Breast epithelium (tissue), 4 donors: ENCODE measurements at regions of chr14 and their contacts with region 1.

Region 1: DNA sequence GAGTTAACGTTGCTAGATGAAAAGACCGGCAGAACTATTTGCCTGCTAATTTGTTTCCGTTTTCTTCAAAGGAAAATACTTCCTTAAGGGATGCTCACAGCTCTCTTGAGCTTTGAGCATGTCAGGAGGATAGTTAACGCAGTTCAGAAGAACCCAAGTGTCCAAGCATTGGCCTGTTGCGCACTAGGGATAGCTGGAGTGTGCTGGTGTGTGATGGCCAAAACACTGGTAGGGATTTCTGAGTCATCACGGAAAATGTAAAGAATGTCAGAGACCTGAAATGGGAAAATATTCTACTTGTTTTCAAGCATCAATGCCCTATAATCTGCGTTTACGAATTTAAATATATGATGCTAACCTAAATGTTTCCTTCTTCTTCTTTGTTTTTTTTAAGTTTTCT is 97.8 kb downstream of the VRK1 start:
- DNase-seq: no peak
- H3K4me3 ChIP-seq: no peak overlapping the region
- H3K27ac ChIP-seq: no peak overlapping the region
- H3K4me1 ChIP-seq: no peaks in the 10 kb centered on the region
- H3K27me3 ChIP-seq: no peaks in the 10 kb centered on the region
- CTCF ChIP-seq: no peak
- POLR2A ChIP-seq: no peak

Region 2: DNA sequence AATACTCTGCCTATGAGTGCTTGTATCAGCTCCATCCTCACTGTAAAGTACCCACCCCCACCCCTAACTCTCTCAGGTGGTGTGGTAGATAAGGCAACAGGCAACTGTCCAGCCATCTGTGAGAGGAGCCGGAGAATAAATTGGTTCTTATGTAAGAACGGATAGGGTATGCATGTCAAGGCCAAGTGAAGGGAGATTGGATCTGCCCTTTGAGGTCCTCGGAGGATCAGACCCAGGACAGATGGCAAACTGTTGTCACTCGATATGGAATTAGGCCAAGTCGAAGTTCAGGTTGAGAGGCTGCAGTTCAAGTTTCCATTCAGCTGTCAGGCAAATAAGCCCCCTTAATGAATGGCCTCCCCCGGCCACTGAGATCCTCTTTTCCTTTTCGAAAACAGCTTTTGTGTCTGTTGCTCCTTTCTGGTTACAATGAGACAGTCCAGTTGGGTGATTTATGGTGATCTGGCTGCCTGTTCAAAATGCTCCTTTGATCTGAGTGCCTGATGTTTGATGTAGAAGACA is 22.5 kb after region 1 on chr14:
- intact Hi-C with region 1: loop called (anchors 1 kb)
- DNase-seq: no peak
- H3K4me3 ChIP-seq: no peak overlapping the region
- H3K27ac ChIP-seq: no peak overlapping the region
- H3K4me1 ChIP-seq: no peaks in the 10 kb centered on the region
- H3K27me3 ChIP-seq: no peaks in the 10 kb centered on the region
- CTCF ChIP-seq: no peak
- POLR2A ChIP-seq: no peak

Region 3: DNA sequence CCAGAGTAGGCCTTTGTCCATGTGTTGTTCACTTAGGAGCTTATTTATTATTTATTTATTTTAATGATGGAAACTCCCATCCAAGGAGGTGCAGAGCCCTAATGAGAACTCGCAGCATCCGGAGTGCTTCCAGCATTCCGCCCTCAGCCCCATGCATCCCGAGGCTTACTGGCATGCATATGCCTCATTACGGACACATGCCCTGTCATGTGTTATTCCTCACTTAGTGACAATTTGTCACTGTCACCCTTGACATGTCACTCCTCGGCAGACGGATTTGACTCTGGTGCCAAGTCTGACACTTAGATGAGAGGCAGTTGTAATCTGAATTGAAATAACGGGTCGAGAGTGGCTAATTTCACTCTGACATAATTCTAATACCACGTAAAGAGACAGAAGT is 35.0 kb after region 1 on chr14:
- intact Hi-C with region 1: no loop called
- DNase-seq: no peak
- H3K4me3 ChIP-seq: no peak overlapping the region
- H3K27ac ChIP-seq: no peak overlapping the region
- H3K4me1 ChIP-seq: no peaks in the 10 kb centered on the region
- H3K27me3 ChIP-seq: no peaks in the 10 kb centered on the region
- CTCF ChIP-seq: no peak
- POLR2A ChIP-seq: no peak

Region 4: GRCh38 chr14:97564334-97564733 is 669.4 kb after region 1 on chr14:
- intact Hi-C with region 1: no loop called
- DNase-seq: no peak
- H3K4me3 ChIP-seq: no peak overlapping the region
- H3K27ac ChIP-seq: no peak overlapping the region
- H3K4me1 ChIP-seq: no peaks in the 10 kb centered on the region
- H3K27me3 ChIP-seq: peaks cover 0 to 21% of the 10 kb centered on the region in 2 donors
- CTCF ChIP-seq: no peak
- POLR2A ChIP-seq: no peak